H1 (cell line): ENCODE measurements at regions of chr10 and their contacts with region 1.

Region 1: DNA sequence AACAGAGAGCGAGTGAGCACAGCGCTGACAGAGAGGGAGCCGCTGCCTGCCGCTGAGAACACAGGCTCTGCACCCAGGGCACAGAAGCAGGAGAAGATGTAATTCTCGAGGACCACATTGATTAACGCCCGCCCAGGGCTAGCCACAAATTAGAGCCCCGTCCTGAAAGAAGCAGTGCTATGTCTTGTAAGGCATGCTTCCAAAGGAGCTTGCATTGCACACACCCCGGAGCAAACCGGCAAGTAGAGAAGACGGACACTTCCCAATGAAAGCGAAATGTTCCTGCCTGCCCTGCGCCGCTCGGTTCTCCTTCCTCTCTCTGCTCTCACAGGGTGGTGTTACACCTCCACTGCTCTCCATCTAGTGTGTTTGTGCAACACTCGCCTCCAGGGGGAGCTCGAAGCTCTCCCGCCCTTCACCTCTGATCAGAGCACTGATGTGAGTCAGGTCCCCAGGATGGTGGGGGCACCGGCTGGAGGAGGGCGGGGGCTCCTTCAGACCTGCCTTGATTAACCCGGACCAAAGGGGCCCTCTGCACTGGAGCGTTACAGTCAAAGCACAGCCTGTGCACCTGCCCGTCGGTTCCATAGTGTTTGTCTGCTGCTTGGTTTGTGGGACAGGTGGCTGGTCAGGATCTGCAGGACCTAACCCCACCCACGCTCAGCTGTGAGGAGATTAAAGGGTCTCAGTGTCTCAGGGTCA is 316.5 kb downstream of the ADARB2 start:
- DNase-seq: peak; percentile 84 to 93
- H3K4me3 ChIP-seq: peak overlapping the region; percentile 35 to 64 (median 48); a peak in 6 of 8 replicates
- H3K27ac ChIP-seq: no peak overlapping the region
- H3K4me1 ChIP-seq: peaks cover 0 to 3% (median 2%) of the 10 kb centered on the region in 4 experiments; a peak in 5 of 7 replicates
- H3K27me3 ChIP-seq: peaks cover 0 to 14% (median 7%) of the 10 kb centered on the region in 4 experiments; a peak in 5 of 7 replicates
- CTCF ChIP-seq: peak; percentile 78 to 97 (median 86)
- EP300 ChIP-seq: peak in 1 of 2 experiments; percentile 23; a peak in 1 of 3 replicates
- POLR2A ChIP-seq: no peak
- RAD21 ChIP-seq: peak; percentile 93 to 94

Region 2: GRCh38 chr10:1379601-1380000 is 41.2 kb before region 1 on chr10:
- CTCF ChIA-PET with region 1: interaction called, 11 read pairs
- POLR2A ChIA-PET with region 1: interaction called, 3 read pairs
- DNase-seq: peak in 1 of 2 experiments; percentile 54
- H3K4me3 ChIP-seq: no peak overlapping the region
- H3K27ac ChIP-seq: no peak overlapping the region
- H3K4me1 ChIP-seq: peaks cover 5 to 11% (median 6%) of the 10 kb centered on the region in 4 experiments
- H3K27me3 ChIP-seq: no peaks in the 10 kb centered on the region; a peak in 2 of 7 replicates
- CTCF ChIP-seq: peak; percentile 56 to 78 (median 62)
- EP300 ChIP-seq: no peak
- POLR2A ChIP-seq: no peak
- RAD21 ChIP-seq: peak; percentile 82

Region 3: GRCh38 chr10:1395088-1396006 is 25.5 kb before region 1 on chr10:
- CTCF ChIA-PET with region 1: interaction called, 10 read pairs
- POLR2A ChIA-PET with region 1: no interaction called
- DNase-seq: no peak
- H3K4me3 ChIP-seq: no peak overlapping the region
- H3K27ac ChIP-seq: no peak overlapping the region
- H3K4me1 ChIP-seq: peaks cover 0 to 3% (median 0%) of the 10 kb centered on the region in 4 experiments; a peak in 1 of 7 replicates
- H3K27me3 ChIP-seq: no peaks in the 10 kb centered on the region; a peak in 2 of 7 replicates
- CTCF ChIP-seq: no peak
- EP300 ChIP-seq: no peak
- POLR2A ChIP-seq: no peak
- RAD21 ChIP-seq: no peak